Prostate gland (tissue), 2 donors: ENCODE measurements at regions of chr1 and their contacts with region 1.

Region 1: DNA sequence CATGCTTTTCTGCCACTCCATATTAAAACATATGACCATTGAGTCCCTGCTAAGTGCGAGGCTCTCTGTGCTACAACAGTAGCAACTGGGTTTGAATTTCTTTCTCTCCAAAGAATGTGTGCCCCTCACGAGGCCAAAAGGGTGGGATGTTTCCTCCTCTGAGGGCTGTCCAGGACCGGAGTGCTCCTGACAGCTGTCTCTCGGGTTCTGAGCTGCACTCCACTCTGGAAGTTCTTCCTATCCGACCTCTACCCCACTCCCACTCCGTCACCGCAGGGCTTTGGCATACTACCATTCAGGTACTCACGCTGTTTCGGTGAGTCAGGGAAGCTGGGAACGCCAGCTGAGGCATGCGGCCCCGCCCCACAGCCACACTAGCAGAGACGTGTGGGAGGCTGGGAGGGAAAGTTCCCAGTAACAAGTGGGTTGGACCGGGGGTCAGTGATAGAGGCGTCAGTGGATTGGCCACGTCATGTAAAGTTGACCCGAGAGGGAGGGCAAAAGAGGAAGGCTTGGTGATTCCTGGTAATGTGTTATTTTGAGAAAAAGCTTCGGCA is 716 bp upstream of the SLC50A1 start:
- DNase-seq: peak; percentile 87
- H3K4me3 ChIP-seq: peak overlapping the region; percentile 49 to 58
- H3K27ac ChIP-seq: peak overlapping the region; percentile 94 to 97
- H3K4me1 ChIP-seq: peaks cover 32% of the 10 kb centered on the region
- H3K27me3 ChIP-seq: no peaks in the 10 kb centered on the region
- CTCF ChIP-seq: no peak
- POLR2A ChIP-seq: peak; percentile 55

Region 2: GRCh38 chr1:155167166-155168104 is 32.5 kb after region 1 on chr1:
- intact Hi-C with region 1: loop called (anchors 5 kb)
- DNase-seq: peak; percentile 87
- H3K4me3 ChIP-seq: no peak overlapping the region
- H3K27ac ChIP-seq: peak overlapping the region; percentile 48 to 58
- H3K4me1 ChIP-seq: peaks cover 3% of the 10 kb centered on the region
- H3K27me3 ChIP-seq: no peaks in the 10 kb centered on the region
- CTCF ChIP-seq: peak; percentile 78 to 97 (median 95)
- POLR2A ChIP-seq: no peak

Region 3: GRCh38 chr1:155287987-155288543 is 153.1 kb after region 1 on chr1:
- intact Hi-C with region 1: no loop called
- DNase-seq: no peak
- H3K4me3 ChIP-seq: no peak overlapping the region
- H3K27ac ChIP-seq: no peak overlapping the region
- H3K4me1 ChIP-seq: no peaks in the 10 kb centered on the region
- H3K27me3 ChIP-seq: no peaks in the 10 kb centered on the region
- CTCF ChIP-seq: no peak
- POLR2A ChIP-seq: no peak

Region 4: GRCh38 chr1:155379631-155380090 is 244.7 kb after region 1 on chr1:
- intact Hi-C with region 1: no loop called
- DNase-seq: no peak
- H3K4me3 ChIP-seq: no peak overlapping the region
- H3K27ac ChIP-seq: peak overlapping the region; percentile 0 to 5
- H3K4me1 ChIP-seq: peaks cover 4% of the 10 kb centered on the region
- H3K27me3 ChIP-seq: no peaks in the 10 kb centered on the region
- CTCF ChIP-seq: no peak
- POLR2A ChIP-seq: no peak